Sciatic nerve (tissue), 2 donors: ENCODE measurements at regions of chr4 and their contacts with region 1.

Region 1: GRCh38 chr4:87006676-87007527 is 72.1 kb downstream of the AFF1 start:
- DNase-seq: peak; percentile 95
- ATAC-seq: peak; percentile 96

Region 2: GRCh38 chr4:86934771-86935565 is 71.9 kb before region 1 on chr4 and contains the start of gene AFF1:
- intact Hi-C with region 1: loop called (anchors 10 kb)
- DNase-seq: peak; percentile 91
- ATAC-seq: peak; percentile 93
- total RNA-seq, gene AFF1: 121 TPM

Region 3: GRCh38 chr4:87093443-87094123 is 86.7 kb after region 1 on chr4:
- intact Hi-C with region 1: loop called (anchors 10 kb)
- DNase-seq: no peak
- ATAC-seq: peak; percentile 75